Activated CD4-positive, alpha-beta T cell treated with anti-CD3 and anti-CD28 coated beads for 36 hours (primary cell): ENCODE measurements at regions of chr6 and their contacts with region 1.

Region 1: GRCh38 chr6:133916650-133917151 is 27.8 kb downstream of the TCF21 start:
- DNase-seq: peak; percentile 91
- ATAC-seq: peak; percentile 60
- H3K4me3 Mint-ChIP-seq: no peak overlapping the region
- H3K27ac Mint-ChIP-seq: no peak overlapping the region
- H3K4me1 Mint-ChIP-seq: peaks cover 3% of the 10 kb centered on the region
- H3K27me3 Mint-ChIP-seq: peaks cover 19% of the 10 kb centered on the region

Region 2: GRCh38 chr6:132962936-132963868 is 953.5 kb before region 1 on chr6:
- CTCF ChIA-PET with region 1: interaction called, 6 read pairs
- POLR2A ChIA-PET with region 1: no interaction called
- intact Hi-C with region 1: loop called (anchors 5 kb)
- DNase-seq: peak; percentile 81
- ATAC-seq: peak; percentile 83
- H3K4me3 Mint-ChIP-seq: no peak overlapping the region
- H3K27ac Mint-ChIP-seq: no peak overlapping the region
- H3K4me1 Mint-ChIP-seq: peaks cover 2% of the 10 kb centered on the region
- H3K27me3 Mint-ChIP-seq: peaks cover 23% of the 10 kb centered on the region

Region 3: DNA sequence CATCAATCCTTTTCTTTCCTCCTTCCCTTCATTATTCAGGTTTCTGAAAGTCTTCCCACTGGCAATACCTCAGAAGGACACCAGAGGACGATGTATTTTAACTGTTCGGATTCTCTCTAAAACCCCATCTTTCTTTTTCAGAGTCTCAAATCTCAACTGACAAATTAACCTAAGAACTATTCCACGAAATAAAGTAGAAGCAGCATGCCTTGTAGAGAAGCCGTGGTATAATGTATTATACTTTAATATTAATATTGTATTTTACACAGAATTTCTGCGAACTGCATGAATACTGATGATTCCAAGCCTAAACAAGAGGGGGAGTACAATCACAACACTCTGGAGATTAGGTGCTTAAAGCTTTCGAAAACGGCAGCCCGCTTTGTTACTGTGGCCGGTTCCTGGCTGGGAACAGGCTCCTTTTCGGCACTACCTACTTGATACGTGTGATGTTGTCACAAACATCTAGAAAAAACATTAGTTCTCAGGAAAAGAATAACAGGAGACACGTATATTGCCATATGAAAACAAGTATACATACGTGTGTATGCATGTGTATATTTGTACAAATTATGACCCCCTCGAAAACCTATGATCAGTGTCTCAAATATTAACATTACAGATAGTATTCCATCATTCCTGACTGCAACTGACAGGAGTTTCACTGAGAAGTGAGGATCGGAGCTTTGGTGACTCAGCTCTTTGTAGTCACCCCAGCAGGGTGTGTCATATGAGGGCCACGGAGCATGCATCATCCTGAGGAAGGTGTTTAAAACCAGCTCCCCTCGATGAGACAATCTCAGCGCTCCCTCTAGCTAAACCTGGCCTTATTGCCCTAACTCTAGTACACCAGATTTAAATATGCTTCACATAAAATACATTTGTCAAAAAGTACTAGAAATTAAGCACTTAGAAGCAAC is 347.5 kb before region 1 on chr6:
- CTCF ChIA-PET with region 1: interaction called, 51 read pairs
- POLR2A ChIA-PET with region 1: no interaction called
- intact Hi-C with region 1: loop called (anchors 1 kb)
- DNase-seq: peak; percentile 61
- ATAC-seq: peak; percentile 99
- H3K4me3 Mint-ChIP-seq: peak overlapping the region; percentile 40
- H3K27ac Mint-ChIP-seq: no peak overlapping the region
- H3K4me1 Mint-ChIP-seq: peaks cover 7% of the 10 kb centered on the region
- H3K27me3 Mint-ChIP-seq: peaks cover 28% of the 10 kb centered on the region

Region 4: GRCh38 chr6:133891149-133891926 is 25.4 kb before region 1 on chr6:
- CTCF ChIA-PET with region 1: interaction called, 13 read pairs
- POLR2A ChIA-PET with region 1: no interaction called
- intact Hi-C with region 1: no loop called
- DNase-seq: peak; percentile 43
- ATAC-seq: peak; percentile 42
- H3K4me3 Mint-ChIP-seq: peak overlapping the region; percentile 63
- H3K27ac Mint-ChIP-seq: no peak overlapping the region
- H3K4me1 Mint-ChIP-seq: peaks cover 41% of the 10 kb centered on the region
- H3K27me3 Mint-ChIP-seq: peaks cover 76% of the 10 kb centered on the region

Region 5: GRCh38 chr6:133906050-133906449 is 10.7 kb before region 1 on chr6:
- CTCF ChIA-PET with region 1: interaction called, 33 read pairs
- POLR2A ChIA-PET with region 1: no interaction called
- intact Hi-C with region 1: no loop called
- DNase-seq: no peak
- ATAC-seq: no peak
- H3K4me3 Mint-ChIP-seq: no peak overlapping the region
- H3K27ac Mint-ChIP-seq: no peak overlapping the region
- H3K4me1 Mint-ChIP-seq: no peaks in the 10 kb centered on the region
- H3K27me3 Mint-ChIP-seq: peaks cover 47% of the 10 kb centered on the region

Region 6: GRCh38 chr6:134303903-134304302 is 387.2 kb after region 1 on chr6:
- CTCF ChIA-PET with region 1: no interaction called
- POLR2A ChIA-PET with region 1: no interaction called
- intact Hi-C with region 1: no loop called
- DNase-seq: no peak
- ATAC-seq: no peak
- H3K4me3 Mint-ChIP-seq: no peak overlapping the region
- H3K27ac Mint-ChIP-seq: no peak overlapping the region
- H3K4me1 Mint-ChIP-seq: peaks cover 4% of the 10 kb centered on the region
- H3K27me3 Mint-ChIP-seq: no peaks in the 10 kb centered on the region